Heart right ventricle (tissue), 16 donors: ENCODE measurements at regions of chr15 and their contacts with region 1.

Region 1: GRCh38 chr15:37691911-37692310 is 242.5 kb upstream of the TMCO5A start:
- DNase-seq: no peak
- ATAC-seq: no peak
- H3K4me3 ChIP-seq: no peak overlapping the region
- H3K27ac ChIP-seq: no peak overlapping the region
- H3K4me1 ChIP-seq: no peaks in the 10 kb centered on the region
- H3K27me3 ChIP-seq: no peaks in the 10 kb centered on the region
- CTCF ChIP-seq: no peak

Region 2: DNA sequence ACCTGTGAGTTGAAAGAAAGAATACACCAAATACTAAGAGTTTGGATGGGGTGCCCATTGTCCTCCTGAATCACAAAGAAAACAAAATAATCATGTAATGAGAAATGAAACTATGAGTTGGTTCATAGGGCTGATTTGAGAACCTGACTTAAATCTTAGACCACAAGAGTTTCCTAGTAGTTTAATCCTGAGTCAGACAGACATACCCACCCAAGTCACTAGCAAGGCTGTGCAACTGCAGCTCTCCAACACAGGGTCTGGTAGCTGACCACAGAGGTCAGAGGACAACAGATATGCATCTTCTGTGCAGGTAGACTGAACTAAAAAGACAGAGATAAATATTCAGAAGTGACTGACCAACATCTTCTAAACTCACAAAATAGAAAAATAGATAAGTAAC is 53.8 kb before region 1 on chr15:
- intact Hi-C with region 1: loop called in 1 of 10 experiments (anchors 5 kb)
- DNase-seq: no peak
- ATAC-seq: no peak
- H3K4me3 ChIP-seq: no peak overlapping the region
- H3K27ac ChIP-seq: no peak overlapping the region
- H3K4me1 ChIP-seq: no peaks in the 10 kb centered on the region
- H3K27me3 ChIP-seq: no peaks in the 10 kb centered on the region
- CTCF ChIP-seq: no peak

Region 3: DNA sequence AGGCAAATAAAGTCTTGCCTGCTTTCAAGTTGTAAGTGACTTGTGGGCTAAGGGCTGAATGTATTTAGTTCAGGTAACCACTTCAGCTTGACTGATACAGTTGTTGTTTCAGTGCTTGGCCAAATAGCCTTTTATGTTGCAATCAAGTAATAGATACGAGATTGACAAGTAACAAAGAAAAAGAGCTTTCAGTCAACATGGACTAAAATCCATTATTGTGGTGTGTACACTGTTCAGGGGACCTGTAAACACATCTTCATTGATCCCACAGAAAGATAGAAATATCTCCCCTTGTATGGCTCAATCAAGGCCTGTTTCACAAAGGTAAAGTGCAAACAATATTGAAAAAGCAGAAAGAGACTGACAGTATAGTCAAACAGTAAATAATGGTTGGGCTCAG is 17.8 kb after region 1 on chr15:
- intact Hi-C with region 1: no loop called
- DNase-seq: no peak
- ATAC-seq: no peak
- H3K4me3 ChIP-seq: no peak overlapping the region
- H3K27ac ChIP-seq: no peak overlapping the region
- H3K4me1 ChIP-seq: no peaks in the 10 kb centered on the region
- H3K27me3 ChIP-seq: no peaks in the 10 kb centered on the region
- CTCF ChIP-seq: no peak